Posterior vena cava (tissue), 2 donors: ENCODE measurements at regions of chr11 and their contacts with region 1.

Region 1: GRCh38 chr11:70709088-70709487 is 310.8 kb downstream of the CTTN start:
- DNase-seq: peak; percentile 12

Region 2: GRCh38 chr11:70364745-70365543 is 344.1 kb before region 1 on chr11:
- intact Hi-C with region 1: no loop called
- DNase-seq: no peak

Region 3: DNA sequence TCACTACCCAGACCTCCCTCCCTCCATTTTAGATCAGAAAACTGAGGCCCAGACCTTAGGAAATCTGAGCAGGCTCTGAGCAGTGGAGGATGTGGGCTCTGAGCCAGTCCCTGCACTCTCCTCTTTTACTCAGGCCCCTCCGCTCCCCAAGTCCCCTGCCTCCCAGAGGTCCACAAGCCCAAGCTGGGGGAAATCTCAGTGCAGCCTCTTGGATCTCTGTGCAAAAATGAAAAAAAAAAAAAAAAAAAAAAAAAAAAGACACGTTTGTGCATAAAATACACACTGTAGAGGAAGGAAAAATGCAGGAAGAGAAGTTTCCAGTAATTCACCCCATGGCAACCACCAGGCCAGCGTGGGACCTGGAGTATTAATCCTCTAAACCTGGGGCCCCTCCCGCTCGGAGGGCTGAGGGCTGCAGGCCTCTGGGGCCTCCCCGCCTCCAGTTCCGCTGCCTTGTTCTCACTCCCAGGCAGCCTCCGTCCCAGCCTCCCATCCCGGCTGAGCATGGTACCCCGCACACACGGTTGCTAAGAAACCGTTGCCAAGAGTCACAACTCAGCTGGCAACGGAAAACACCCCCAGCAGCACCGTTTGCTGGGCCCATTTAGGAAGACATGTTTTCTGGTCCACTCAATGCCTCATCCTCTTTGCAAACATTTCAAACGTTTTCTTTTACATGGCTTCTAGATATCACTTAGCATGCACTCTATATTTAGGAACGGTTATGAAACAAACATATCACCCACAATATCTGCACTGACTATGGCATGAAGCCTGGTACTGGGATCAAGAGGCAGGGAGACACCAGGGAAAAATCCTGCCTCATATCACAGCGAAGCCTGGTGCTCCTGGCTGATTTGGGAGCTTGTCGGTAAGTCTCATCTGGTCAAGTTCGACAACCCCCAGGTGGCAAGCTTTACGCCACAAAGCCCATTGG is 83.2 kb before region 1 on chr11:
- intact Hi-C with region 1: loop called in 1 of 2 experiments (anchors 1 kb)
- DNase-seq: no peak